B cell (primary cell): ENCODE measurements at regions of chr3 and their contacts with region 1.

Region 1: GRCh38 chr3:10198761-10199649 is 34.3 kb downstream of the IRAK2 start:
- DNase-seq: peak; percentile 94
- ATAC-seq: peak; percentile 63
- H3K4me3 ChIP-seq: peak overlapping the region in 2 of 5 experiments; percentile 9 to 40
- H3K4me3 Mint-ChIP-seq: peak overlapping the region; percentile 82
- H3K27ac ChIP-seq: peak overlapping the region; percentile 96 to 97
- H3K27ac Mint-ChIP-seq: peak overlapping the region; percentile 97
- H3K4me1 ChIP-seq: peaks cover 76 to 80% of the 10 kb centered on the region in 2 donors
- H3K4me1 Mint-ChIP-seq: peaks cover 67% of the 10 kb centered on the region
- H3K27me3 ChIP-seq: no peaks in the 10 kb centered on the region
- H3K27me3 Mint-ChIP-seq: no peaks in the 10 kb centered on the region
- CTCF ChIP-seq: no peak

Region 2: GRCh38 chr3:10142707-10143566 is 56.1 kb before region 1 on chr3:
- CTCF ChIA-PET with region 1: interaction called, 10 read pairs
- POLR2A ChIA-PET with region 1: interaction called, 10 read pairs
- intact Hi-C with region 1: no loop called
- DNase-seq: peak; percentile 31
- ATAC-seq: no peak
- H3K4me3 ChIP-seq: peak overlapping the region; percentile 8 to 91 (median 77)
- H3K4me3 Mint-ChIP-seq: peak overlapping the region; percentile 95
- H3K27ac ChIP-seq: peak overlapping the region; percentile 88 to 96
- H3K27ac Mint-ChIP-seq: peak overlapping the region; percentile 97
- H3K4me1 ChIP-seq: peaks cover 28 to 50% of the 10 kb centered on the region in 2 donors
- H3K4me1 Mint-ChIP-seq: peaks cover 32% of the 10 kb centered on the region
- H3K27me3 ChIP-seq: no peaks in the 10 kb centered on the region
- H3K27me3 Mint-ChIP-seq: no peaks in the 10 kb centered on the region
- CTCF ChIP-seq: no peak

Region 3: GRCh38 chr3:10180738-10181295 is 18.2 kb before region 1 on chr3:
- CTCF ChIA-PET with region 1: interaction called, 10 read pairs
- POLR2A ChIA-PET with region 1: interaction called, 8 read pairs
- intact Hi-C with region 1: loop called (anchors 2 kb)
- DNase-seq: no peak
- ATAC-seq: no peak
- H3K4me3 ChIP-seq: no peak overlapping the region
- H3K4me3 Mint-ChIP-seq: peak overlapping the region; percentile 70
- H3K27ac ChIP-seq: peak overlapping the region; percentile 12 to 66
- H3K27ac Mint-ChIP-seq: peak overlapping the region; percentile 84
- H3K4me1 ChIP-seq: peaks cover 18 to 31% of the 10 kb centered on the region in 2 donors
- H3K4me1 Mint-ChIP-seq: peaks cover 28% of the 10 kb centered on the region
- H3K27me3 ChIP-seq: no peaks in the 10 kb centered on the region
- H3K27me3 Mint-ChIP-seq: no peaks in the 10 kb centered on the region
- CTCF ChIP-seq: no peak

Region 4: GRCh38 chr3:10213156-10213792 is 14.3 kb after region 1 on chr3:
- CTCF ChIA-PET with region 1: interaction called, 29 read pairs
- POLR2A ChIA-PET with region 1: interaction called, 11 read pairs
- intact Hi-C with region 1: loop called (anchors 2 kb)
- DNase-seq: peak; percentile 65
- ATAC-seq: peak; percentile 87
- H3K4me3 ChIP-seq: no peak overlapping the region
- H3K4me3 Mint-ChIP-seq: peak overlapping the region; percentile 72
- H3K27ac ChIP-seq: no peak overlapping the region
- H3K27ac Mint-ChIP-seq: peak overlapping the region; percentile 71
- H3K4me1 ChIP-seq: peaks cover 13 to 30% of the 10 kb centered on the region in 2 donors
- H3K4me1 Mint-ChIP-seq: peaks cover 19% of the 10 kb centered on the region
- H3K27me3 ChIP-seq: no peaks in the 10 kb centered on the region
- H3K27me3 Mint-ChIP-seq: no peaks in the 10 kb centered on the region
- CTCF ChIP-seq: no peak

Region 5: DNA sequence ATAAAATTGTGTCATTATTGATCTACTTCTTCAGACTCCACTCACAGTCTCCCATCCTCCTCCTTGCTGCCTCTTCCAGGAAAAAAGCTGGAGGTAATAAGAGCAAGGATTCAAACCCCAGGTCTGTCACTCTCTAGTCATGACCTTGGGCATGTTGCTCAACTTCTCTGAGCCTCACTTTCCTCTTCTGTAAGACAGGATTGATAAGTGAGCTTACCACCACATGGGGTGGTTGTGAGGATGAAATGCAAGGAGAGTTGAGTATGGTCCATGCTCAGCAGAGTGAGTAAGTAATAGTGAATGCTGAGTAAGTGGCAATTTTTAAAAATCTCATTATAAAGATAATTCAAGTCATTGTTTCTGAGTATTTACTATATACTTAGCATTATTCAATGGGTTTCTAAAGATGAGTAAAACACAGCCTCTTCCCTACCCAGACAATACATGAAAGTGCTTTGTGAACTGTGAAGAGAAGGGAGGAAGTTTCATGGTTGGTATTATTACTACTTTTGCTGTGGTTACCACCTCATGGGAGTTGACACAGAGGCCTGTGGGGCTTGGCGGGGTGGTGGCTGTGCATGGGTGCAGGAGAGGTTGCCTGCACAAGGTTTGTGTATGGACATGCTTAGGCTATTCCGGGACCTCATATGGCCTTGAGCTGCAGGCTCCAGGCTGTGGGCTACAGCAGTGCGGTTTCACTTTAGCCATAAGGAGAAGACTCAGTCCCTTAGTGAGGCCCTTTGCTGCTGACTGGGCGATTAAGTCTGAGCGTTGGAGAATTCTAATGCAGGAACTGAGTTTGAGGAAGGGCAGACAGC is 647.0 kb after region 1 on chr3:
- CTCF ChIA-PET with region 1: no interaction called
- POLR2A ChIA-PET with region 1: no interaction called
- intact Hi-C with region 1: no loop called
- DNase-seq: peak; percentile 14
- ATAC-seq: peak; percentile 21
- H3K4me3 ChIP-seq: no peak overlapping the region
- H3K4me3 Mint-ChIP-seq: no peak overlapping the region
- H3K27ac ChIP-seq: no peak overlapping the region
- H3K27ac Mint-ChIP-seq: no peak overlapping the region
- H3K4me1 ChIP-seq: peaks cover 0 to 11% of the 10 kb centered on the region in 2 donors
- H3K4me1 Mint-ChIP-seq: peaks cover 15% of the 10 kb centered on the region
- H3K27me3 ChIP-seq: peaks cover 0 to 12% (median 5%) of the 10 kb centered on the region in 4 experiments
- H3K27me3 Mint-ChIP-seq: peaks cover 37% of the 10 kb centered on the region
- CTCF ChIP-seq: no peak